Heart left ventricle (tissue), 16 donors: ENCODE measurements at regions of chr1 and their contacts with region 1.

Region 1: GRCh38 chr1:15803354-15803753 is 4.1 kb downstream of the UQCRHL start:
- DNase-seq: no peak
- ATAC-seq: no peak
- H3K4me3 ChIP-seq: no peak overlapping the region
- H3K27ac ChIP-seq: no peak overlapping the region
- H3K4me1 ChIP-seq: peaks cover 0 to 22% (median 11%) of the 10 kb centered on the region in 12 donors
- H3K27me3 ChIP-seq: no peaks in the 10 kb centered on the region
- CTCF ChIP-seq: peak; percentile 23 to 61 (median 37)
- POLR2A ChIP-seq: no peak

Region 2: DNA sequence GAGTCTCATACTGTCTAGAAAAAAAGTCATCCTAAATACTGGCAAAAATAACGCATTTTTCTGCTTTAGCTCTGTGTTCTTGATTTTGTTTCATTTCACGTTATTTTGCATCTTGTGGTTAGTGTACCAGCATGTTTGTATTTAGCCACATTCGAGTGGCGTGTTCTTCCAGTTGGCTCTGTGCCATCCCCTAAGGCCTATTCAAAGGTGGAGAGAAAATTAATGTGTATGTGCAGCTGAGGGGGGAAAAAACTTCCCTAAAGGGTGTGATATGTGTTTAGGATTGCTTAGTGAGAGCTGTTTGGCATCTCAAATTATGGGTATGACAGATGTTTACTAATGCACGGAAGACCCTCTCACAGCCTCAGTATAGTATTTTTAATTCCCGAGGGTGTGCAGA is 264.6 kb before region 1 on chr1:
- intact Hi-C with region 1: no loop called
- DNase-seq: no peak
- ATAC-seq: no peak
- H3K4me3 ChIP-seq: no peak overlapping the region
- H3K27ac ChIP-seq: no peak overlapping the region
- H3K4me1 ChIP-seq: no peaks in the 10 kb centered on the region
- H3K27me3 ChIP-seq: no peaks in the 10 kb centered on the region
- CTCF ChIP-seq: no peak
- POLR2A ChIP-seq: no peak

Region 3: DNA sequence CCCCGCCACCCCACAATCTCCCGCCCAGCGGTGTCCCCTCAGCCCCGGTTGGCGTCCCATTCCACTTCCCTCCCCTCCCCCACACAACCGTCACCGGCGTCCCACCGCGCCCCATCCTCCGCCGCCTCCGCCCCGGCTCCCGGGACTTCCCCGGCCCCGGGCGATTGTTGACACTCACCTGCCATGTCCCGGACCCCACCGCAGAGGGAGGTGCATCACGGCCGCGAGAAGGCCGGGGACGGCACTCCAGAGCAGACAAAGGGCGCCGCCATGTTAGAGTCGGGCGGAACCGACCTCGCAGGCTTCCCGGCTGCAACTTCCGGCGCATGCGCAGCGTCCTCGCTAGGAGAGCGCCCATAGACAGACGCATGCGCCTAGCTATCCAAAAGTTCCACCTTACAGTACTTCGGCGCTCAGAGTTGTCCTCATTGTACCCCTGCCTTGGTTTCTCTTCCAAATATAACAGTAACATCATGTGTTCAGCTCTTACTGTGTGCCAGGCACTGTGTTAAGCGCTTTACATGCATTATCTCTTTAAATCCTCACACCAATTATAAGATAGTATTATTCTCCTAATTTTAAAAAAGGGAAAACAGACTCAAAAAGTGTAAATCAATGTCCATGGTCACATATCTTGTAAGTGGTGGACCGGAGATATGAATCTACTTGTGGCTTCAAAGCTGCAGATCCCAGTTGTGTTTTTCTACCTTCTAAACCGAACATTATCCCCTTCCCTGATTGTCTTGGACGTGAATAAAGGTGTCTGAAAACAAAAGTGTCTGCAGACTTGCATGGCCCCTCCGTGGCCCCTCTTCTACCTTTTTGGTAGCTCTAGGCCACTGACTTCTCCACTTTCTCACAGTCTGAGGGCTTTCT is 172.7 kb after region 1 on chr1 and contains the start of gene ZBTB17:
- intact Hi-C with region 1: loop called in 2 of 10 experiments (anchors 5 to 10 kb)
- DNase-seq: peak; percentile 93 to 97 (median 96)
- ATAC-seq: peak; percentile 98 to 99 (median 99)
- H3K4me3 ChIP-seq: peak within 1 kb of the TSS; percentile 73 to 98 (median 79)
- H3K27ac ChIP-seq: peak within 1 kb of the TSS in 11 of 12 donors; percentile 67 to 91 (median 82)
- H3K4me1 ChIP-seq: peaks cover 0 to 29% (median 12%) of the 10 kb centered on the region in 12 donors
- H3K27me3 ChIP-seq: no peaks in the 10 kb centered on the region
- CTCF ChIP-seq: peak in 1 of 12 donors; percentile 5
- POLR2A ChIP-seq: peak in 1 of 2 donors; percentile 65
- total RNA-seq, gene ZBTB17: 14.5 to 29.2 (median 20.7) TPM

Region 4: DNA sequence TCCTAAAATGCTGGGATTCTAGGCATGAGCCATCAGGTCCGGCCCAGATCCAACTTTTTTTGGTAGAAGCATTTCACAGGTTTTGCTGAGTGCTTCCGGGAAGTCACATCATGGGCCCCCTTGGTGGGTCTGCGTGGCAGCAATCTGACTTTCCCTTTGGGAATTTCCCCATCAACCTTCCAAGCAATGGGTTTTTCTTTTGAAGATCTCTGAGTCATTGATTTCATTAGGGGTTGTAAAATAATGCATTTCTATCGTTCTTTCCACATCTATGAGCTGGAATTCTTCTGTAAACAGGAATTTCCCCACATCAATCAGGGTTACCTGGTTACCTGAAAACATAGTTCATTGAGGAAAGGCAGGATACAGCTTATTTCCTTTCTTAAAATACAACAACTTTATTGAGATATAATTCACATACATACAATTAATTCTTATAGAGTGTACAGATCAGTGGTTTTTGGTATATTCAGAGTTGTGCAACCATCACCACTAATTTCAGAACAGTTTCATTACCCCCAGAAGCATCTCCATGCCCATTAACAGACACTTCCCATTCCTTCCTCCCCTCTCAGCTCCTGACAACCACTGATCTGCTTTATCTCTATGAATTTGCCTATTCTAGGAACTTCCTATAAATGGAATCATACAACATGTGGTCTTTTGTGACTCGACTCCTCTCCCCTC is 182.4 kb after region 1 on chr1:
- intact Hi-C with region 1: loop called in 3 of 10 experiments (anchors 5 to 10 kb)
- DNase-seq: no peak
- ATAC-seq: no peak
- H3K4me3 ChIP-seq: no peak overlapping the region
- H3K27ac ChIP-seq: no peak overlapping the region
- H3K4me1 ChIP-seq: no peaks in the 10 kb centered on the region
- H3K27me3 ChIP-seq: no peaks in the 10 kb centered on the region
- CTCF ChIP-seq: no peak
- POLR2A ChIP-seq: no peak

Region 5: DNA sequence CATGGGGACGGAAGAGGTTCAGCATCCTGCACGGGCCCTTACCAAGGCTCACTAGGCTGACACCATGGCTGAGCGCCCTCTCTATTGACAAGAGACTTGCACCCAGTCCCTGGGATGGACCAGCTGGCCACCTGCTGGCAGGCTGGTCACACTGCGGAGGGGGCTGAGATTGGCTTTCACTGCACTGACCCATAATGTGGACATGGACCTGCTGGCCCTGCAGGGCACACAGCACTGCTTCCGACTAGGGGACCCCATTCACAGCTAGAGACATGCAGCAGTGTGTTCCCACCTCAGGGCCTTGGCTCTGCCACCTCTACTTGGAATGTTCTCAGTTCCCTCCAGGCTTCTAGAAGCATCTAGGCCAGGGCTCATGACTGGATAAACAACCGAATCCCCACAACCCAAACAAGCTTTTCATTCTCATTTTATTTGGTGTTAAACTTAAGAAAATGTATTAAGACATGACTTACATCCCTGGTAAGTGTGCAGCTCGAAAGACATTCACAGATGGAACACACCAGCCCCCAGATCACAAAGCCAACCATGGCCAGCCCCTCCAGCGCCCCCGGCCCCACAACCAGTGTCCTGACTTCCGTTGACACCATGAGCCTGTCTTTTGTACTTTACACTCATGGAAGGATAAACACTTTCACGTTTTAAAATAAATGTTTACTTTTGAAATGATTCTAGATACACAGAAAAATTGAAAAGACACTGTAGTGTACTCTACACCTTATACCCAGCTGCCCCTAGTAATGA is 191.4 kb after region 1 on chr1:
- intact Hi-C with region 1: loop called in 3 of 10 experiments (anchors 5 to 10 kb)
- DNase-seq: peak in 4 of 5 donors; percentile 55 to 83 (median 67)
- ATAC-seq: peak; percentile 45 to 87 (median 83)
- H3K4me3 ChIP-seq: no peak overlapping the region
- H3K27ac ChIP-seq: no peak overlapping the region
- H3K4me1 ChIP-seq: no peaks in the 10 kb centered on the region
- H3K27me3 ChIP-seq: no peaks in the 10 kb centered on the region
- CTCF ChIP-seq: peak; percentile 69 to 92 (median 74)
- POLR2A ChIP-seq: no peak

Region 6: GRCh38 chr1:16048573-16049189 is 245.3 kb after region 1 on chr1:
- intact Hi-C with region 1: loop called in 4 of 10 experiments (anchors 5 to 10 kb)
- DNase-seq: peak in 4 of 5 donors; percentile 44 to 72 (median 63)
- ATAC-seq: peak; percentile 39 to 75 (median 50)
- H3K4me3 ChIP-seq: peak overlapping the region; percentile 4 to 59 (median 44)
- H3K27ac ChIP-seq: peak overlapping the region in 3 of 12 donors; percentile 3 to 34 (median 18)
- H3K4me1 ChIP-seq: peaks cover 0 to 11% (median 5%) of the 10 kb centered on the region in 12 donors
- H3K27me3 ChIP-seq: peaks cover 0 to 6% (median 0%) of the 10 kb centered on the region in 9 donors
- CTCF ChIP-seq: peak in 4 of 12 donors; percentile 6 to 18 (median 12)
- POLR2A ChIP-seq: no peak